ENCODE measurements at regions of chr12 and their contacts with region 1.

Region 1: DNA sequence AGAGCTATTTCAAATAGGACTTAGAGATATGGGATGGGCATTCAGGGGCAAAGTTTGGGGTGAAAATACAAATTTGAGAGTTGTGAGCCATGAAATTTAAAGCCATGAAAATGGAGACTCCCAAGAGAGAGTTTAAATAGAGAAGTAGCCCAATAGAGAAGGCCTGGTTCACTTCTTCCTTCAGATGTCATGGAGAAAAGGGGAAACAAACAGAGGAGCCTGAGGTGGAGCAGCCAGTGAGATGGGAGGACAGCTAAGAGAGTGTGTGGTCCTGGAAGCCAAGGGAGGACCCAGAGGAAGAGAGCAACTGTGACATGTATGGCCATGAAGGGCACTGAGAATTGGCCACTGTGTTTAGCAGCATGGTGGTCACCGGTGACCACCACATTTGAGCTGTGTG is 12.3 kb upstream of the DYNLL1 start:
- DNase-seq: no peak
- H3K4me3 ChIP-seq: no peak overlapping the region
- H3K27ac ChIP-seq: no peak overlapping the region
- H3K4me1 ChIP-seq: peaks cover 0 to 6% of the 10 kb centered on the region in 2 experiments; a peak in 1 of 4 replicates
- H3K27me3 ChIP-seq: no peaks in the 10 kb centered on the region
- CTCF ChIP-seq: no peak
- EP300 ChIP-seq: no peak
- RAD21 ChIP-seq: no peak

Region 2: GRCh38 chr12:120453977-120454376 is 29.6 kb before region 1 on chr12:
- CTCF ChIA-PET with region 1: no interaction called
- POLR2A ChIA-PET with region 1: no interaction called
- DNase-seq: peak; percentile 68
- H3K4me3 ChIP-seq: no peak overlapping the region
- H3K27ac ChIP-seq: no peak overlapping the region
- H3K4me1 ChIP-seq: no peaks in the 10 kb centered on the region
- H3K27me3 ChIP-seq: no peaks in the 10 kb centered on the region
- CTCF ChIP-seq: peak; percentile 68
- EP300 ChIP-seq: no peak
- RAD21 ChIP-seq: peak; percentile 47

Region 3: GRCh38 chr12:120495723-120496412 is 12.2 kb after region 1 on chr12 and contains the start of gene DYNLL1:
- CTCF ChIA-PET with region 1: interaction called, 5 read pairs
- POLR2A ChIA-PET with region 1: interaction called, 10 read pairs
- DNase-seq: peak; percentile 98
- H3K4me3 ChIP-seq: peak within 1 kb of the TSS; percentile 83 to 89
- H3K27ac ChIP-seq: peak within 1 kb of the TSS; percentile 63 to 88; a peak in 3 of 4 replicates
- H3K4me1 ChIP-seq: peaks cover 0 to 11% of the 10 kb centered on the region in 2 experiments; a peak in 2 of 4 replicates
- H3K27me3 ChIP-seq: no peaks in the 10 kb centered on the region
- CTCF ChIP-seq: no peak
- EP300 ChIP-seq: no peak
- RAD21 ChIP-seq: no peak
- polyA plus RNA-seq, gene DYNLL1: 596 and 607 TPM in 2 replicates